Ascending aorta (tissue), 2 donors: ENCODE measurements at regions of chr14 and their contacts with region 1.

Region 1: GRCh38 chr14:77760381-77761246 is at the start of gene SNW1:
- DNase-seq: peak; percentile 84 to 96
- H3K4me3 ChIP-seq: peak within 1 kb of the TSS; percentile 71 to 99
- H3K27ac ChIP-seq: peak within 1 kb of the TSS; percentile 92 to 99
- H3K4me1 ChIP-seq: peaks cover 19% of the 10 kb centered on the region in 2 donors
- H3K27me3 ChIP-seq: no peaks in the 10 kb centered on the region
- CTCF ChIP-seq: no peak
- total RNA-seq, gene SNW1: 16.8 TPM

Region 2: GRCh38 chr14:77799863-77800730 is 39.5 kb after region 1 on chr14 and contains the start of gene ADCK1:
- intact Hi-C with region 1: loop called (anchors 1 kb)
- DNase-seq: peak; percentile 74 to 95
- H3K4me3 ChIP-seq: peak within 1 kb of the TSS; percentile 91 to 98
- H3K27ac ChIP-seq: peak within 1 kb of the TSS; percentile 87 to 94
- H3K4me1 ChIP-seq: peaks cover 0 to 3% of the 10 kb centered on the region in 2 donors
- H3K27me3 ChIP-seq: no peaks in the 10 kb centered on the region
- CTCF ChIP-seq: peak; percentile 36 to 52 (median 37)
- total RNA-seq, gene ADCK1: 0.43 TPM